Activated naive CD8-positive, alpha-beta T cell treated with anti-CD3 and anti-CD28 coated beads, Interleukin-2, amount 10 ng/mL, durations not matched to agents 7 days and 5 days (primary cell): ENCODE measurements at regions of chr18 and their contacts with region 1.

Region 1: DNA sequence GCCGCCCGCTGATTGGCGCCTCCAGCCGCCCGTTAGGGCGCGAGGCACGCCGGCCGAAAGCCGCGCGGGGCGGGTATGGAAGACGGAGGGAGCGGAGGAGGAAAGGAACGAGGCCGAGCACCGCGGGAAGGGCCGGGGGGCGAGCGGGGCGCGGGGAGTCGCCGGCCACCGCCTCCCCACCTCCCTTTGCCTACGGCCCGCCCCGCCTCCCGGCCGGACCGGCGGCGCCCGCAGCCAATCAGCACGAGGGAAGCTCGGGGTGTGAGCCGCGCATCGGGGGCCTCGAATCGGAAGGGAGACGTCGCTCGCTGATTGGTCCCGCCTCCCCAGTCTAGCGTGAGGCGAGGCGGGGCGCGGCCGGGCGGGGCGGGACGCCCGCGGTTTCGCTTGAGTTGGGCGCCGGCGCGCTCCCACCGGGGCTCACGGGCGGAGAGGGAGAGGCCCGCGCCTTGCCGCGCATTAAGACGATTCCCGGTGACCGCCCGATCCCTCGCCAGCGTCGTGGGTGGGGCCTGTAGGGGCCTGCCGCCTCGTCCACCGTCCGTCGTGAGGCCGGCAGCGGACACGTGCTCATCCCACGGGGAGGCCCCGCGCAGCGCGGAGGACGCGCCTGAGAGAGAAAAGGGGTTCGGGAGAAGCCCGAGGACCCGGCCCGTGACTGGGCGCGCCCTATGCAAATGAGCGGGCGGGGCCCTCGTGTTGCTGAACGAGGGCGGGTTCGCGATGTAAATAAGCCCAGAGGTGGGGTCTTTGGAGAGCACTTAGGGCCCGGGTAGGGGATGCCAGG is 665 bp upstream of the SMAD2 start:
- DNase-seq: peak; percentile 95
- ATAC-seq: peak; percentile 80
- H3K4me3 Mint-ChIP-seq: peak overlapping the region; percentile 87
- H3K27ac Mint-ChIP-seq: peak overlapping the region; percentile 89
- H3K4me1 Mint-ChIP-seq: peaks cover 32% of the 10 kb centered on the region
- H3K27me3 Mint-ChIP-seq: peaks cover 2% of the 10 kb centered on the region

Region 2: GRCh38 chr18:47790036-47790435 is 141.1 kb before region 1 on chr18:
- POLR2A ChIA-PET with region 1: no interaction called
- DNase-seq: no peak
- ATAC-seq: no peak
- H3K4me3 Mint-ChIP-seq: no peak overlapping the region
- H3K27ac Mint-ChIP-seq: no peak overlapping the region
- H3K4me1 Mint-ChIP-seq: no peaks in the 10 kb centered on the region
- H3K27me3 Mint-ChIP-seq: peaks cover 13% of the 10 kb centered on the region

Region 3: DNA sequence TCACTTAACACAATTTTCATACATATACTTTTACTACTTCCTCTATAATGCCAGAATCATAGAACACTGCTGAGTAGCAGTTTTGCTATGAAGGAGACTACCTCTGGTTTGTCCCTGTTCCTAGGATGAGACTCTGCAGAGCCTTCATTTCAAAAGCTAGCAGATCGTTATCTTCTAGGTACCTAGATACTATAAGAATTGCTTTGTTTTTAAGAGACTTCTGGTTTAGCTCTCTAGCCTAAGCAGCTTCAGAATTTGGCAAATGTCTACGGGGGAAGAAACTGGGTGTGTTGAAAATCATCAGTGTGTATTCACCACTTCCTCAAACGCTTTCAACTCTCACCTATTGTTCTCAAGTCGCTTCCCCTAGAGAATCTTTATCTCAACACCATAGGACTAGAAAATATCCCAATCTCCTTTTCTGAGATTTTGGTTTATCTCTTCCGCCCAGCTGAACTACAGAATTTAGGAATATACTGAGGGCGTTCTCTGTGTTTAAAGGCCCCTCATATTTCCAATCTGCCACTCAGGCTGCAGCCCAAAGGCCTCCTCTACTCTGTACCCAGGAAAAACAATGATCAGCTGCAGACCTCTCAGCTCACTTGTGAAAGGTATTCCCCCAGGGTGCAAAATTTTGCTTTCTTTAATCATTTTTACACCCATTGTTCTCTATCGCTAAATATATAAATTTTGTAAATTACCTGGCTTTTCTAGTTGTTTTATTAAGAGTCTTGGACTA is 29.3 kb before region 1 on chr18:
- POLR2A ChIA-PET with region 1: interaction called, 21 read pairs
- DNase-seq: no peak
- ATAC-seq: peak; percentile 96
- H3K4me3 Mint-ChIP-seq: peak overlapping the region; percentile 64
- H3K27ac Mint-ChIP-seq: peak overlapping the region; percentile 76
- H3K4me1 Mint-ChIP-seq: peaks cover 20% of the 10 kb centered on the region
- H3K27me3 Mint-ChIP-seq: no peaks in the 10 kb centered on the region

Region 4: GRCh38 chr18:47964053-47964452 is 32.9 kb after region 1 on chr18:
- POLR2A ChIA-PET with region 1: no interaction called
- DNase-seq: no peak
- ATAC-seq: no peak
- H3K4me3 Mint-ChIP-seq: no peak overlapping the region
- H3K27ac Mint-ChIP-seq: no peak overlapping the region
- H3K4me1 Mint-ChIP-seq: no peaks in the 10 kb centered on the region
- H3K27me3 Mint-ChIP-seq: peaks cover 2% of the 10 kb centered on the region